Left cardiac atrium (tissue), 4 donors: ENCODE measurements at regions of chr1 and their contacts with region 1.

Region 1: GRCh38 chr1:64675718-64676345 is 69.0 kb upstream of the RAVER2 start:
- DNase-seq: no peak
- ATAC-seq: no peak

Region 2: GRCh38 chr1:64378826-64379225 is 297.0 kb before region 1 on chr1:
- intact Hi-C with region 1: loop called in 1 of 2 experiments (anchors 10 kb)
- DNase-seq: no peak
- ATAC-seq: no peak

Region 3: GRCh38 chr1:64469977-64470664 is 205.7 kb before region 1 on chr1 and contains the start of gene CACHD1:
- intact Hi-C with region 1: loop called in 1 of 2 experiments (anchors 5 kb)
- DNase-seq: peak; percentile 83
- ATAC-seq: peak; percentile 87 to 88
- total RNA-seq, gene CACHD1: 3.5 to 9.2 TPM